ENCODE measurements at regions of chr1 and their contacts with region 1.

Region 1: GRCh38 chr1:63516629-63517028 is 6.4 kb downstream of the ITGB3BP start:
- DNase-seq: no peak
- H3K4me3 ChIP-seq: no peak overlapping the region
- H3K27ac ChIP-seq: no peak overlapping the region
- H3K4me1 ChIP-seq: peaks cover 18% of the 10 kb centered on the region
- CTCF ChIP-seq: no peak

Region 2: DNA sequence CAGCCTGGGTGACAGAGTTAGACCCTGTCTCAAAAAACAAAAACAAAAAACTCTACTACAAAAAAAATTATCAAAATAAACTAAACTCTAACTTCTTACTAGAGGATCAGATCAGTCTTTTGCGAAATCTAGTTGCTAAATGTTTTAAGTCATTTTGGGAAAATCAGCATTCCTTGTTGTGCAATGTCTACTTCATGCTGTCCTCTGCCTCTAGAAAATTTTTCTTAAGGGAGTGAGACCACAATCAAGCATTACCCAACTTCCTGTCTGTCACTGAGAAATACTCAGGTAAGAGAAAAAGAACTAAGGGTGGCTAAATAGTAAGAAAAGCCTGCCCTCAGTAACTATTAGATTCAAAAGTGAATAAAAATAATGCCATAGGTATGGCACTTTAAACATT is 261.5 kb before region 1 on chr1:
- CTCF ChIA-PET with region 1: no interaction called
- POLR2A ChIA-PET with region 1: no interaction called
- intact Hi-C with region 1: no loop called
- DNase-seq: no peak
- H3K4me3 ChIP-seq: no peak overlapping the region
- H3K27ac ChIP-seq: no peak overlapping the region
- H3K4me1 ChIP-seq: no peaks in the 10 kb centered on the region
- CTCF ChIP-seq: no peak

Region 3: GRCh38 chr1:63501256-63501655 is 15.4 kb before region 1 on chr1:
- CTCF ChIA-PET with region 1: no interaction called
- POLR2A ChIA-PET with region 1: no interaction called
- intact Hi-C with region 1: loop called (anchors 2 kb)
- DNase-seq: no peak
- H3K4me3 ChIP-seq: no peak overlapping the region
- H3K27ac ChIP-seq: no peak overlapping the region
- H3K4me1 ChIP-seq: no peaks in the 10 kb centered on the region
- CTCF ChIP-seq: no peak

Measured in OCI-LY7 (cell line).